T-cell (primary cell): ENCODE measurements at regions of chr14 and their contacts with region 1.

Region 1: DNA sequence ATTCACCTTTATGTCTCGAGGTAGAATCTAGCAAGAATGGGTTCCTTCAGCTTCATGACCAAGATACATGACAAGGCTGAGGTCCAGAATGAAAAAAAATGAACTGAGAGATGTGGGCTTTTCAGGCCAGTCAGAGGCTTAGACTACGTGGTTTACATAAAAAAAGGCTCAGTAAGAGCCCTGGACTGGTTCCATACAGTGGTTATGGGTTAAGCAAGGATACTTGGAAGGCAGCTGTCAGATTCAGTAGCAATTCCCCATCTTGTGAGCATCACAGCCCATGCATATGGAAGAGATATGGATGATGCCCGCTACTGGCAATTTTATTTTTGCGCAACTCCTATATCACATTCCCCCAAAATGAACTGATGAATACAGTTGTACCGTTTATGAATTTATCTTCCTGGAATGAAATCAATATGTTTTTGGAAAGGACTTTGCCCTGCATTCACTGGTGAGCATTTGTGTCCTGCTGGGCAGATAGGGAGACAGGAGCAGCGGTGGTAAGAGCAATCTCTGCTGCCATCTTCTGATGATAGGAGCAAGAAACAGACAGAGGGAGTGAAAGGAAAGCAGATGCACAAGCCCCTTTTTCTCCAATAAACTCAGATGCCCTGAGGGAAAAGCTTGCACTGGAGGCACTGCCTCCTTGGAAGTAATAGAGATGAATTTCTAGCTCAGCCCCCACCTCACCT is 280.4 kb downstream of the GALC start:
- DNase-seq: no peak
- ATAC-seq: no peak
- H3K4me3 ChIP-seq: no peak overlapping the region
- H3K4me3 Mint-ChIP-seq: no peak overlapping the region
- H3K27ac ChIP-seq: no peak overlapping the region
- H3K27ac Mint-ChIP-seq: no peak overlapping the region
- H3K4me1 ChIP-seq: no peaks in the 10 kb centered on the region
- H3K4me1 Mint-ChIP-seq: no peaks in the 10 kb centered on the region
- H3K27me3 ChIP-seq: no peaks in the 10 kb centered on the region
- H3K27me3 Mint-ChIP-seq: no peaks in the 10 kb centered on the region

Region 2: DNA sequence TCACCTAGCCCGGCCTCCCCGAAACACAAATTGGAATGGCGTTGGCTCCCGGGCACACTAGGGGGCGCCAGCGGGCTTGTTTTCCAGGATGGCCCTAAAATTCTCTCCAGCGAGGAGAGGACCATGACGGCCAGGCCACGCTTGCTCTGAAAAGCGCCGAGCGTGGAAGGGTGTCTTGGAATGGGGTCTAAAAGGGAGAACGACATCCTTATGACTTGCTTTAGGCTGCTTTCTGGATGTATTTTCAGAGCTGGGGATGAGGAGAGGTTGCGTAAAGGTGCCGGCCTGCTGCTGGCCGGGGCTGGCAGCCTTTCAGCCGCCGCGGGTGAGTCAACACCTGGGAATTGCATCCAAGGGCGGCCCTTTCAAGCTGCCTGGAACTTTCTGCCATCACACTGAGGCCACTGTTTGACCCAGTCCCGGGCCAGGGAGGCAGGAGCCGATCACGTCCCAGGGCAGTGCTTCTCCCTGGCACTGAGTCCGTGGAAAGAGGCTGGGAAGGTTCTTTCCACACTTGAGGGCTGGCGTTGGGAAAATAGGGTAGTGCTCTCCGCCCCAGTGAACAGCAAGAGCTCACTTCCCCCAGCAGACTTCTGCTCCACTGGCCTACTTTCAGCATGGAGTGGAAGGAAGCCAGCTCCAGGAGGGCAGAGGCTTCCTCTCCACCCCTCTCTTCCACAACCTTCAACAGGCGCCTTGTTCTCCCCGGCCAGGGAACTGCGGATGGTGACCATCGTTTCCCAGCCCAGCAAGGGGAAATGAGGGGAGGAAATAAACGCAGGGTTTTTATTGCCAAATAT is 1328.1 kb after region 1 on chr14:
- CTCF ChIA-PET with region 1: interaction called in 1 of 2 experiments, 15 read pairs
- POLR2A ChIA-PET with region 1: no interaction called
- DNase-seq: peak; percentile 31 to 83 (median 71)
- ATAC-seq: peak; percentile 52 to 73 (median 60)
- H3K4me3 ChIP-seq: peak overlapping the region; percentile 11 to 73
- H3K4me3 Mint-ChIP-seq: peak overlapping the region; percentile 73 to 74 (median 74)
- H3K27ac ChIP-seq: no peak overlapping the region
- H3K27ac Mint-ChIP-seq: no peak overlapping the region
- H3K4me1 ChIP-seq: peaks cover 0 to 9% of the 10 kb centered on the region in 2 experiments
- H3K4me1 Mint-ChIP-seq: peaks cover 11 to 17% (median 13%) of the 10 kb centered on the region in 3 donors
- H3K27me3 ChIP-seq: peaks cover 0 to 28% of the 10 kb centered on the region in 2 experiments
- H3K27me3 Mint-ChIP-seq: peaks cover 22 to 27% of the 10 kb centered on the region in 2 donors